ENCODE measurements at regions of chr14 and their contacts with region 1.

Region 1: DNA sequence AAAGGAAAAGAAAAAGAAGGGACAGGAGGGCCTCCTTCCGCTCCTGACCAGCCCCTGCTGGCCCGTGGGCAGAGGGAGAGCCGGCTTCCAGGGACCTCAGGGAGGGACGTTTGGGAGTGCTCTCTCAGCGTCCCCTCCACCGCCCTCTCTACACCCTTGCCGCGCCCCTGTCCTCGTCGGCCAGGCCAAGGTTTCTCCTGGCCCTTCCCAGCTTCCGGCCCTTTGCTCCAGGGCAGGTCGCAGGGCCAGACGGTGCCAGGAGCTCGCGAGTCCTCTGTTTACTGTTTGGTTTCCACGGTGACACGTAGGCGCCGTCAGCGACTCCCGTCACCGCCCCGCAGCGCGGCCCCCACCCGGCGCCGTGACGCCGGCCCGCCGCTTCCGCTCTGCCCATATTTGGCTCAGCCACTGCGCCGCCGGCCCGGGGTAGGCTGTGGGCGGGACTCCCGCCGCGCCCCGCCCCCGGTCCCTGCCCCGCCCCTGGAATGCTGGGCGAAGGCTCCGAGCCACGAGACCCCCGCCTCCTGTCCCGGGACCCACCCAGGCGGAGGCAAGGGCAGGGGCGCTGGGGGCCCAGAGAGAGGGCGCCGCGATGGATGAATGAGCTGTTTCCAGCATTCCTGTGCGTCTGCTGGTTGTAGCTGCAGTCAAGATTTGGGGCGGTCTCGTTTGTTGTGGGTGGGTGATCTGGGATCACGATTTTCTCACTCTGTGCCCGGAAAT is 15.5 kb downstream of the FOS start:
- DNase-seq: peak; percentile 94
- H3K4me3 Mint-ChIP-seq: peak overlapping the region; percentile 73
- H3K27ac Mint-ChIP-seq: peak overlapping the region; percentile 60
- H3K4me1 Mint-ChIP-seq: peaks cover 25% of the 10 kb centered on the region
- H3K27me3 Mint-ChIP-seq: peaks cover 56% of the 10 kb centered on the region

Region 2: DNA sequence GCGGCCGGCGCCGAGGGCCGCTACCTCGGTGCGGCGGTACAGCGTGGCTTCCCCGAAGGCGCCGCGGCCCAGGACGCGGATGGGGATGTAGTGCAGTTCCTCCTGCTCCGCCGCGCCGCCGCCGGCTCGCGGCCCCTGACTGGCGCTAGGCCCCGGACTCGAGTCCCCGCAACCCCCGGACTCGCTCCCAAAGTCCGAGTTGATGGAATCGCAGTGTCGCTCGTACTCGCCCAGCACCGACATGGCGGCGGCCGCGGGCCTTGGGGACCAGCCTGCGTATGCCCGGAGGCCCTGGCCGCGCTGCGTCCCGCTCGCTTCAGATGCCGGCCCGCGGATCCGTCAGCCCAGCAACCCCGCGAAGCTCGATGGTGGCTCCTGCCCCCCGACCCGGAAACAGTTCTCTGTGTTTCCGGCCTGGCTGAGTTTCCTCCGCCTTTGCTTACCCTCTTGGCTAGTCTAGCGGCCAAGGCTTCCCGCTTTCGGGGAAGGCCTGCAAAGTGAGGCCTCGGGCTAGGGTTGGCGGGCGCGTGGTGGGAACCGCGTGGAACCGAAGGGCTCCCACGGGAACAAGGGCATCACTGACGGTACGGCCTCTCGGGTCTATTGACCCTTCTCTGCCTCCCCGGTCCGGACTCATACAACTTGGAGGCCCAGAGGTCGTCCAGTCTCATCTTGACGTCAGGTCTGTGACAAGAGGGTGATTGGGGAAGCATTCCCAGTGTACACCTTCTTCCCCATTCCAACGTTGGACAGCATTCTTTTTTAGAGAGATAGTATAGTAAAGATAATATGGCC is 167.2 kb before region 1 on chr14 and contains the start of gene NEK9:
- CTCF ChIA-PET with region 1: interaction called, 100 read pairs
- DNase-seq: peak; percentile 94
- H3K4me3 Mint-ChIP-seq: peak within 1 kb of the TSS; percentile 97
- H3K27ac Mint-ChIP-seq: peak within 1 kb of the TSS; percentile 96
- H3K4me1 Mint-ChIP-seq: peaks cover 41% of the 10 kb centered on the region
- H3K27me3 Mint-ChIP-seq: no peaks in the 10 kb centered on the region

Region 3: DNA sequence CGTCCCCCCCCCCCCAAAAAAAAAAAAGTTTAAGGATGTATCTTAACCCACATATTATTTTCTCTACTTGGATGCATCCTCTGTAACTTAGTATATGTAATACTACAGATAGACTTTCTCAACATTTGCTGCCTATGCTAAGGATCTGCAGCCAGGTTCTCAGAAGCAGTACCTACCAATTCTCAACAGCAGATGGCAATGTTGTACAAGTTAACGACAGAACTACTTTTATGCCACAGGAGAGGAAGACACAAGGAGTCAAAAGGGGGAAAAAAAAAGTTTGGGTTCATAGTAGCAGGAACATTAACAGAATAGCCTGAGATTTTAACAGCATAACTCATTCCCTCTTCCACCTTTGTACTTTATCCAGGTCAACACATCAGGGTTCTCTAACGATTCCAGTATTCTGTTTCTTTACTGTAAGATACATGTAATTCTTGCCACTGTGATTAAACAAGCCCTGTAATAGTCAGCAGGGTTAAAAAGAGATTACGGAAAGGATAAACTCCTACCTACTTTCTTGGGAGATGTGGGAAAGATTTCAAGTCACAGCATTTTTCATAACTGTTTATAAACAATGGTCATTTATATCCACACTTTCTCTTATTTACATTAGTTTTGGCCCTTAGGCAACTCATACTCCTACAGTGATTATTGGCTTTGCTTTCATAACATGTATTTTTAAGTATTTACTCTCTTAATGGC is 161.5 kb before region 1 on chr14:
- CTCF ChIA-PET with region 1: interaction called, 100 read pairs
- DNase-seq: peak; percentile 58
- H3K4me3 Mint-ChIP-seq: no peak overlapping the region
- H3K27ac Mint-ChIP-seq: no peak overlapping the region
- H3K4me1 Mint-ChIP-seq: peaks cover 22% of the 10 kb centered on the region
- H3K27me3 Mint-ChIP-seq: no peaks in the 10 kb centered on the region

Region 4: DNA sequence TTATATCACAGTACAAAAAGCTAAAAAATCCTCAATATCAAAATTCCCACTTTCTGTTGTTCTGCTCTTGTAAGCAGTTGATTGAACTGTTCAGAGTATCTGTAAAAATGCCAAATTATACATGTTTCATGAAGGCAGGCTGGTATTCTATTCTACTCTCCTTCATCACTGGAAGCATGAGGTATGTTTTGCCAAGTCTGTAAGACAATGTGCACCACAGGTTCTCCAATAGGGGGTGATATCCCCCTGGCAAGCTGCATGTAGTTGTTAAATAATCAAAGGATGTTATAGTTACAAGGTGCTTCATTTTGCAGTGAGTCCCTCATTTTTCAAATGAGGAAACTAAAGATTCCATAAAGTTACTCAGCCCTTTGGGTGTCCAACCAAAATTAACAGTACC is 152.1 kb before region 1 on chr14:
- CTCF ChIA-PET with region 1: interaction called, 22 read pairs
- DNase-seq: peak; percentile 36
- H3K4me3 Mint-ChIP-seq: no peak overlapping the region
- H3K27ac Mint-ChIP-seq: no peak overlapping the region
- H3K4me1 Mint-ChIP-seq: peaks cover 64% of the 10 kb centered on the region
- H3K27me3 Mint-ChIP-seq: no peaks in the 10 kb centered on the region

Measured in activated naive CD4-positive, alpha-beta T cell treated with anti-CD3 and anti-CD28 coated beads, Interleukin-2, amount 10 ng/mL, durations not matched to agents 7 days and 5 days (primary cell).